Prostate gland (tissue), 2 donors: ENCODE measurements at regions of chr9 and their contacts with region 1.

Region 1: DNA sequence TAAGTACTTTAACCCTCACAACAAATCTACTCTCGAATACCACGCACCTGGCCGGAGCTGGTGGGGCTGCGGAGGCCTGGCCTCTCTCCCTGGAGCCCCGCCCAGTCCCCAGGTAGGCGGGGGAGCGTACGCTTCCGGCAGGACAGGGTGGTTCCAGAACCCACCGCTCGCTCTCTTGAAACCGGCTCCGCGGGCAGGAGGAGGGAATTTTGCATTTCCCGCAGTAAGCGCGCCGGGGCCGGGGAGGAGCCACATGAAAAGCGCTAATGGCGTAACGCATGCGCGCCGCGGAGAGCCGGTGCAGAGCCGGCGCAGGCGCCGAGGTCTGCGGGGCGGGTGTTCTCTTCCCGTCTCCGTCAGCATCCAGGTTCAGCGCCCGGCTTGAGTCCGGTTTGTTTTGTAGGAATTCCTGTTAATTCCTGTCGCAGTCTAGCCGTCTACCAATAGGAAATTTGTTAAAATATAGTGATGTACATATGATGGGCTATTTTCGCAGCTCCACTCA is 20.8 kb downstream of the CAVIN4 start:
- DNase-seq: peak; percentile 78
- H3K4me3 ChIP-seq: peak overlapping the region; percentile 32 to 36
- H3K27ac ChIP-seq: peak overlapping the region; percentile 34 to 40
- H3K4me1 ChIP-seq: no peaks in the 10 kb centered on the region
- H3K27me3 ChIP-seq: no peaks in the 10 kb centered on the region
- CTCF ChIP-seq: no peak
- POLR2A ChIP-seq: peak; percentile 21

Region 2: GRCh38 chr9:99184475-99185347 is 1414.0 kb before region 1 on chr9:
- intact Hi-C with region 1: loop called (anchors 10 kb)
- DNase-seq: peak; percentile 82
- H3K4me3 ChIP-seq: no peak overlapping the region
- H3K27ac ChIP-seq: no peak overlapping the region
- H3K4me1 ChIP-seq: no peaks in the 10 kb centered on the region
- H3K27me3 ChIP-seq: no peaks in the 10 kb centered on the region
- CTCF ChIP-seq: peak; percentile 83 to 92 (median 87)
- POLR2A ChIP-seq: no peak

Region 3: DNA sequence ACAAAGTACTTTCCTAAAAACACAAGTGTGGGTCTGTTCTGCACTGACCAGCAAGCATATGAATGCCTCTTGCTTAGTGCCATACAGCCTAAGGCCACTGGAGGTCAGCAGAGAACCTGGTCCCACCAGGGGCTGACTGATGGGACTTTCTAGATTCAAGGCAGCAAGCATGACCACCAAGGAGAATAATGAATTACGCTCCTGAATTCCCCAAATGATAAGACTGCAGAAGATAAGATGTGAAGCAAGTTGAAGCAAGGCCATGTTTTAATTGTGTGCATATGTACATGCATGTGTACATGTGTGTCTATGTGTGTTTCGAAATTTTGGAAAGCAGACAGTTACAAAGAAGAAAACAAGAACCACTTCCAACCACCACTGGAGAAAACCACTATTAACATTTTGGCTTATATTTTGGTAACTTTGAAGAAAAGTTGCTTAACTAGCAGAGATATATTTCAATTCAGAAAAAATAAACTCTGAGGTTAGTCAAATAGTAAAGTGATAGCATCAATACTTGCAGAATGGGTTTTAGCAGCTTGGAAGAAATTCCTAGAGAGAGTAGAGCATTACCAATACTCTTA is 570.4 kb before region 1 on chr9:
- intact Hi-C with region 1: loop called (anchors 5 kb)
- DNase-seq: peak; percentile 49
- H3K4me3 ChIP-seq: no peak overlapping the region
- H3K27ac ChIP-seq: no peak overlapping the region
- H3K4me1 ChIP-seq: no peaks in the 10 kb centered on the region
- H3K27me3 ChIP-seq: no peaks in the 10 kb centered on the region
- CTCF ChIP-seq: peak; percentile 24 to 78 (median 66)
- POLR2A ChIP-seq: no peak

Region 4: GRCh38 chr9:100229561-100229960 is 369.1 kb before region 1 on chr9:
- intact Hi-C with region 1: no loop called
- DNase-seq: no peak
- H3K4me3 ChIP-seq: no peak overlapping the region
- H3K27ac ChIP-seq: no peak overlapping the region
- H3K4me1 ChIP-seq: no peaks in the 10 kb centered on the region
- H3K27me3 ChIP-seq: no peaks in the 10 kb centered on the region
- CTCF ChIP-seq: no peak
- POLR2A ChIP-seq: no peak

Region 5: GRCh38 chr9:100322954-100323536 is 275.6 kb before region 1 on chr9:
- intact Hi-C with region 1: loop called (anchors 10 kb)
- DNase-seq: peak; percentile 20
- H3K4me3 ChIP-seq: no peak overlapping the region
- H3K27ac ChIP-seq: no peak overlapping the region
- H3K4me1 ChIP-seq: no peaks in the 10 kb centered on the region
- H3K27me3 ChIP-seq: no peaks in the 10 kb centered on the region
- CTCF ChIP-seq: peak; percentile 13 to 69 (median 62)
- POLR2A ChIP-seq: no peak

Region 6: GRCh38 chr9:100426530-100427428 is 171.9 kb before region 1 on chr9 and contains the start of gene MSANTD3:
- intact Hi-C with region 1: loop called (anchors 10 kb)
- DNase-seq: peak; percentile 58
- H3K4me3 ChIP-seq: peak within 1 kb of the TSS; percentile 86 to 87
- H3K27ac ChIP-seq: peak within 1 kb of the TSS; percentile 85 to 88
- H3K4me1 ChIP-seq: no peaks in the 10 kb centered on the region
- H3K27me3 ChIP-seq: no peaks in the 10 kb centered on the region
- CTCF ChIP-seq: peak in 2 of 4 experiments; percentile 21 to 46
- POLR2A ChIP-seq: peak; percentile 55
- total RNA-seq, gene MSANTD3: 17.3 to 24.5 TPM

Region 7: GRCh38 chr9:100472788-100473275 is 125.9 kb before region 1 on chr9 and contains the start of gene TMEFF1:
- intact Hi-C with region 1: loop called (anchors 10 kb)
- DNase-seq: peak; percentile 6
- H3K4me3 ChIP-seq: peak within 1 kb of the TSS; percentile 45 to 51
- H3K27ac ChIP-seq: no peak within 1 kb of the TSS
- H3K4me1 ChIP-seq: no peaks in the 10 kb centered on the region
- H3K27me3 ChIP-seq: no peaks in the 10 kb centered on the region
- CTCF ChIP-seq: no peak
- POLR2A ChIP-seq: no peak
- total RNA-seq, gene TMEFF1: 1.7 to 2.7 TPM

Region 8: GRCh38 chr9:101311758-101312420 is 713.2 kb after region 1 on chr9:
- intact Hi-C with region 1: loop called (anchors 5 kb)
- DNase-seq: peak; percentile 48
- H3K4me3 ChIP-seq: no peak overlapping the region
- H3K27ac ChIP-seq: no peak overlapping the region
- H3K4me1 ChIP-seq: peaks cover 8% of the 10 kb centered on the region
- H3K27me3 ChIP-seq: no peaks in the 10 kb centered on the region
- CTCF ChIP-seq: peak; percentile 49 to 79 (median 73)
- POLR2A ChIP-seq: no peak